ENCODE measurements at regions of chr4 and their contacts with region 1.

Region 1: GRCh38 chr4:173370477-173371291 is at the start of gene SAP30:
- DNase-seq: peak; percentile 98
- H3K4me3 ChIP-seq: peak within 1 kb of the TSS; percentile 79
- H3K27ac ChIP-seq: peak within 1 kb of the TSS; percentile 98
- H3K4me1 ChIP-seq: no peaks in the 10 kb centered on the region
- H3K27me3 ChIP-seq: no peaks in the 10 kb centered on the region
- CTCF ChIP-seq: no peak
- total RNA-seq, gene SAP30: 18.8 to 20.0 TPM

Region 2: GRCh38 chr4:173334085-173334772 is 36.5 kb before region 1 on chr4 and contains the start of gene HMGB2:
- intact Hi-C with region 1: loop called (anchors 5 kb)
- DNase-seq: peak; percentile 100
- H3K4me3 ChIP-seq: peak within 1 kb of the TSS; percentile 91
- H3K27ac ChIP-seq: peak within 1 kb of the TSS; percentile 100
- H3K4me1 ChIP-seq: no peaks in the 10 kb centered on the region
- H3K27me3 ChIP-seq: no peaks in the 10 kb centered on the region
- CTCF ChIP-seq: no peak
- total RNA-seq, gene HMGB2: 94.3 to 246 TPM

Measured in colonic mucosa (tissue), 4 donors.